Activated CD4-positive, alpha-beta memory T cell treated with anti-CD3 and anti-CD28 coated beads for 36 hours (primary cell): ENCODE measurements at regions of chr3 and their contacts with region 1.

Region 1: DNA sequence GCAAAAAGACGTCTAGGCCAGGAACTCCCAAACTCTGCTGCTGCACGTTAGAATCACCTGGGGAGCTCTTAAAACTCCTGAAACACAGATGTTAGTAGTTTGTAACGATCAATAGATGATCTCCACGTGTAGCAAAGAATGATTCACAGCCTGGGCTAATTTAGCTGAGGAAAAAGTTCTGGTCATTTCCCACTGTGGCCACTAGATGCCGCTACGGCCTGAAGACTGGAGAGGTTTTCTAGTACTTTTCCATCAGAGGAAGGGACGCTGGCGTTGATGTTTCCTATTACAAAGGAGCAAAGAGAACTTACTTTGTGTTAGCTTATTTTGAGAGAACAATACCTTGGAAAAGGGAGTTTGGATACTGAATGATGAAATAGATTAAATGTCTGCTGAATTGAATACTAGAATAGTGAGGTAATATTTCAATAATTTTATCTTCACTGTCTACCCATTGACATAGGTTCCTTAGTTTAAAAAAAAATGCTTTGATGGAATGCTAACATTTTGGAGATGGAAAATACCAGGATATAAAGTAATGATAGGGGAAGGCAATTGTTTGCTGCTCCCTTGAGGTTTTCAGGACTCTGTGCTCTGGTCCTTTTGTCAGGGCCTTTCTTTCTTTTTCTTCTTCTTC is 159.1 kb downstream of the P3H2 start:
- DNase-seq: peak; percentile 83
- H3K4me3 Mint-ChIP-seq: no peak overlapping the region
- H3K27ac Mint-ChIP-seq: no peak overlapping the region
- H3K4me1 Mint-ChIP-seq: no peaks in the 10 kb centered on the region
- H3K27me3 Mint-ChIP-seq: peaks cover 9% of the 10 kb centered on the region

Region 2: GRCh38 chr3:189270248-189270832 is 691.3 kb before region 1 on chr3:
- CTCF ChIA-PET with region 1: interaction called, 10 read pairs
- POLR2A ChIA-PET with region 1: no interaction called
- intact Hi-C with region 1: no loop called
- DNase-seq: peak; percentile 58
- H3K4me3 Mint-ChIP-seq: no peak overlapping the region
- H3K27ac Mint-ChIP-seq: no peak overlapping the region
- H3K4me1 Mint-ChIP-seq: peaks cover 13% of the 10 kb centered on the region
- H3K27me3 Mint-ChIP-seq: no peaks in the 10 kb centered on the region

Region 3: GRCh38 chr3:190038050-190038933 is 76.6 kb after region 1 on chr3:
- CTCF ChIA-PET with region 1: no interaction called
- POLR2A ChIA-PET with region 1: no interaction called
- intact Hi-C with region 1: no loop called
- DNase-seq: no peak
- H3K4me3 Mint-ChIP-seq: no peak overlapping the region
- H3K27ac Mint-ChIP-seq: no peak overlapping the region
- H3K4me1 Mint-ChIP-seq: no peaks in the 10 kb centered on the region
- H3K27me3 Mint-ChIP-seq: peaks cover 14% of the 10 kb centered on the region

Region 4: DNA sequence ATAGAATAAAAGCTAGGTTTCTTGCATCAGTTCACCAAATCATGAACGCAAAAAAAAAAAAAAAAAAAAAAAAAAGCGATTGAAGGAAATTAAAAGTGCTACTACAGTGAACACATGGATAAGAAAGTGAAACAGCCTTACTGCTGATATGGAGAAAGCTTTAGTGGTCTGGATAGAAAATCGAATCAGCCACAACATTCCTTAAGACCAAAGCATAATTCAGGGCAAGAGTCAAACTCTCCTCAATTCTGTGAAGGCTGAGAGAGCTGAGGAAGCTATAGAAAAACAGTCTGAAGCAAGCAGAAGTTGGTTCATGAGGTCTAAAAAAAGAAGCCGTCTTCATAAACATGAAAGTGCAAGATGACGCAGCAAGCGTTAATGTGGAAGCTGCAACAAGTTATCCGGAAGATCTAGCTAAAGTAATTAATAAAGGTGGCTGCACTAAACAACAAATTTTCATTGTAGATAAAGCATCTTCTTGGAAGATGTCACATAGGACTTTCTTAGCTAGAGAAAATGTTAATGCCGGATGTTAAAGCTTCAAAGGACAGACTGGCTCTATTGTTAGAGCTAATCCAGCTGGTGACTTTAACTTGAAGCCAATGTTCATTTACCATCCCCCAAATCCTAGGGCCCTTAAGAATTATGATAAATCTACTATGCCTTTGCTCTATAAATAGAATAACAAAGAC is 139.8 kb after region 1 on chr3:
- CTCF ChIA-PET with region 1: no interaction called
- POLR2A ChIA-PET with region 1: no interaction called
- intact Hi-C with region 1: loop called (anchors 5 kb)
- DNase-seq: no peak
- H3K4me3 Mint-ChIP-seq: no peak overlapping the region
- H3K27ac Mint-ChIP-seq: no peak overlapping the region
- H3K4me1 Mint-ChIP-seq: no peaks in the 10 kb centered on the region
- H3K27me3 Mint-ChIP-seq: peaks cover 6% of the 10 kb centered on the region

Region 5: DNA sequence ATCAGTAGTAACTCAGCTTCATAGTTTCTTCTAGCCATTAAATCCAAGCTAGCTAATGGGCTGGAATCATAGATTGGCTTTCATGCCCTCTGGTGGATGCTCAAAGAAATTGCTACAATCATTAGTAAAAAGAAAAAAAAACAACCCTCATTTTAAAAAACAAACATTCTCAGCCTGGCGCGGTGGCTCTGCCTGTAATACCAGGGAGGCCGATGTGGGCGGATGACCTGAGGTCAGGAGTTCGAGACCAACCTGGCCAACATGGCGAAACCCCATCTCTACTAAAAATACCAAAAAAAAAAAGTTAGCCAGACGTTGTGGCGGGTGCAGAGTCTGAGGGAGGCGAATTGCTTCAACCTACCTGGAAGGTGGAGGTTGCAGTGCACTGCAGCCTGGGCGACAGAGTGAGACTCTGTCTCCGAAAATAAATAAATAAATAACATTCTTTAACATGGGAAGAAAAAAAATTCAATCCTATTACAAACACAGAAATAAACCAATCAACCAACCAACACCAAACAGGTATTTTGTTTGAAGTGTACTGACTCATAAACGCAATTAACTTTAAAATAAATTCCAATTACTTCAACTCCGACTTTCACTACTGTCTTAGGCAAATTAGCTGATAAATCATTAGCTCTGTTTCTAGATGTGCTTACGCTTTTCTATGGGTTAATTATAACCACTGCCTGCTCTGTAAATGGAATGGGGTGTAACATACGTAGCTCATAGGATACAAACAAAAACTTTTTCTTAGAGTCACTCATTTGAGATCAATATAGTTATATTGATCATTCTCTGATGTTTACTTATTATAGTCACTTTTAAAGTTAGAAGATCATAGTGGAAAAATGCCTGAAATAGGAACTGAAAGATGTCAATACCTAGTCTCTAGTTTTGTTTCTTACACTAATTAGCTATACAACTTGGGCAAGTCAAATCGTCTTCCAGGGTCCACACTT is 463.1 kb after region 1 on chr3:
- CTCF ChIA-PET with region 1: interaction called, 27 read pairs
- POLR2A ChIA-PET with region 1: no interaction called
- intact Hi-C with region 1: loop called (anchors 2 kb)
- DNase-seq: peak; percentile 66
- H3K4me3 Mint-ChIP-seq: peak overlapping the region; percentile 24
- H3K27ac Mint-ChIP-seq: no peak overlapping the region
- H3K4me1 Mint-ChIP-seq: peaks cover 8% of the 10 kb centered on the region
- H3K27me3 Mint-ChIP-seq: no peaks in the 10 kb centered on the region

Region 6: DNA sequence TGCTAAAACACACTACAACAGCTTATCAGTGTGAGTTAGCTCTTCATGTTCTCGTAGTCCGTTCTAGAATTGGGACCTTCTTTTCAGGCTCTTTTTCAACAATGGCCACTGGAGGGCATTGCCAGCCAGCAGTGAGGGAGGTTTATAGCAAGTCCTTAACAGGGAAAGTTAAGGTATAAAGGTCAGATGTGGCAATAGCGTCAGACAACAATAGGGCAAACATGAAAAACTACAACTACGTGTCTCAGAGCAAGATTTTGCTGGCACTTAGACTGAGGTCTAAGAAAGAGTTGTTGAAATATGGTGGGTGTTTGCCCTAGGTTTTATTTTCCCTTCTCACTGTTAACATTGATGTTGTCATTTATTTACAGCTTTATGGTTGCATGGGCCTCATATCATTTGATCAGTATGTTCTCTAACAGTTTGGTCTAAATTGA is 739.5 kb after region 1 on chr3:
- CTCF ChIA-PET with region 1: interaction called, 11 read pairs
- POLR2A ChIA-PET with region 1: no interaction called
- intact Hi-C with region 1: loop called (anchors 5 kb)
- DNase-seq: peak; percentile 12
- H3K4me3 Mint-ChIP-seq: no peak overlapping the region
- H3K27ac Mint-ChIP-seq: no peak overlapping the region
- H3K4me1 Mint-ChIP-seq: no peaks in the 10 kb centered on the region
- H3K27me3 Mint-ChIP-seq: peaks cover 17% of the 10 kb centered on the region